Dorsolateral prefrontal cortex (tissue), 120 donors: ENCODE measurements at regions of chr14 and their contacts with region 1.

Region 1: DNA sequence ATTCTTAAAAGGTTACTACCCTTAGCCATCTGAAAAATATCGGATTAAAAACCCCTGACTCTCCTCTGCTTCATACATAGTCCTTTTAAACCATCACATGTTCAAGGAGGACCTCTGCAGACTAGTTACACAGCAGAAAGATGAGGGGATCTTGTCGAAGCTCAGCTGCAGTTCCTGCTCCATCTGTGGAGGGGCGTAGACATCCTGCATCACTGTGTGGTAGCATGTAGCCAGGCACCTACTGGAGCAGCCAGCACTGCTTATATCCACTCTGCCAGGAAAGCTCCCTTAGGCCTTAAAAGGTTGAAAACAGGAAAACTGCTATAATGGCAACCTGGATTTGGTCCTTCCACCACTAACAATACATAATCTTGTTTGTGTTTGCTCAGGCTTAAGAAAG is 57.6 kb upstream of the STRN3 start:
- DNase-seq: no peak
- H3K4me3 ChIP-seq: no peak overlapping the region
- H3K27ac ChIP-seq: no peak overlapping the region
- H3K27me3 ChIP-seq: no peaks in the 10 kb centered on the region
- CTCF ChIP-seq: no peak

Region 2: GRCh38 chr14:30790870-30791269 is 292.9 kb before region 1 on chr14:
- intact Hi-C with region 1: no loop called
- DNase-seq: no peak
- H3K4me3 ChIP-seq: no peak overlapping the region
- H3K27ac ChIP-seq: no peak overlapping the region
- H3K27me3 ChIP-seq: no peaks in the 10 kb centered on the region
- CTCF ChIP-seq: no peak

Region 3: DNA sequence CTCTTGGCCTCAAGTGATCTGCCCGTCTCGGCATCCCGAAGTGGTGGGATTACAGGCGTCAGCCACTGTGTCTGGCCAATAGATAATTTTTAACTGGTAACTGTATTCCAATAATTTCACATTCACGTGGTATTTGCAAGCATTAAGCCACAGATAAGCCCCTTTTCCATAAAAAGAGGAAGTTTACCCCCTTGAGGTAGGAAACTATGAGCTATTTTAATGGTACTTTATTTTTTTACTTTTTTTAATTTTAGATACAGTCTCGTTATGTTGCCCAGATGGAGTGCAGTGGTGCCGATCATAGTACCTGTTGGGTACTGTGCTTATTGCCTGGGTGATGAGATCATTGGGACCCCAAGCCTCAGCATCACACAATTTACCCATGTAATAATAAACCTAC is 101.2 kb before region 1 on chr14:
- intact Hi-C with region 1: loop called (anchors 2 to 5 kb)
- DNase-seq: no peak
- H3K4me3 ChIP-seq: no peak overlapping the region
- H3K27ac ChIP-seq: no peak overlapping the region
- H3K27me3 ChIP-seq: no peaks in the 10 kb centered on the region
- CTCF ChIP-seq: no peak